ENCODE measurements at regions of chr6 and their contacts with region 1.

Region 1: DNA sequence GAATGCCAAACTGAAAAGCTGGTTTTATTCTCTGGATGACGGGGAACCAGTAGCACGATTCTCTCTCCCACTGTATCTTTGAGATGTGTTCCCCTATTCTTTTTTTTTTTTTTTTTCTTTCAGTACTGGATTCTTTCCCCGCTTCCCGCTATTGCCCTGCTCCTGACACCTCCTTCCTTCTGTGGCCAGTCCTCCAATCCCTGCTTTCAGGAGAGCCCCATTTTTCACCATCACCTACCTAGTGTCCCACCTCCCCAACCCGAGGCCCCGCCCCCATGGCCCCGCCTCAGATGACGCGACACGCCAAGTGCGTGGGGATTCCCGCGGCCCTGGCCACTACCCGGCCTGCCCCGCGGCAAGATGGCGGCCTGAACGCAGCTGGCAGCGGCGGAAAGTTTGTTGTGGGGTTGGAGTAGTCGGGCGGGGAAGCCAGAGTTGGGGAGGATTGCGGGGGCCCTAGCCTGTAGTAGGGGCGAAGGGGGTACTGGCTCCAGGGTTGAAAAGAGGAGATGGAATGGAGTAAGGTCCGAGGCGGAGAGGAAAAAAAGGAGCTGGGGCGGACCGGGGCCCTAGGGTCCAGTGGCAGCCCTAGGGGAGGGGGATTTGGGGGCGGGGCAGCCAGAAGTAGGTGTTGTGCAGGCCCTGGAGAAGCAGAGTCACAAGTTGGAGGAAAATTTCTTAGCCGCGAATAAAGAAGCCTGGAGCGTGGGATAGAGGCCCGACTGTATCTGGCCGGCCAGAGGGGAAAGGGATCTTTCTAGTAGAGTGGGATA is at the start of gene TJAP1:
- DNase-seq: peak; percentile 100
- H3K4me3 Mint-ChIP-seq: peak within 1 kb of the TSS; percentile 90
- H3K27ac Mint-ChIP-seq: peak within 1 kb of the TSS; percentile 82
- H3K4me1 Mint-ChIP-seq: peaks cover 47% of the 10 kb centered on the region
- H3K27me3 Mint-ChIP-seq: no peaks in the 10 kb centered on the region
- CTCF ChIP-seq: no peak
- total RNA-seq, gene TJAP1: 70.7 and 72.3 TPM in 2 replicates

Region 2: DNA sequence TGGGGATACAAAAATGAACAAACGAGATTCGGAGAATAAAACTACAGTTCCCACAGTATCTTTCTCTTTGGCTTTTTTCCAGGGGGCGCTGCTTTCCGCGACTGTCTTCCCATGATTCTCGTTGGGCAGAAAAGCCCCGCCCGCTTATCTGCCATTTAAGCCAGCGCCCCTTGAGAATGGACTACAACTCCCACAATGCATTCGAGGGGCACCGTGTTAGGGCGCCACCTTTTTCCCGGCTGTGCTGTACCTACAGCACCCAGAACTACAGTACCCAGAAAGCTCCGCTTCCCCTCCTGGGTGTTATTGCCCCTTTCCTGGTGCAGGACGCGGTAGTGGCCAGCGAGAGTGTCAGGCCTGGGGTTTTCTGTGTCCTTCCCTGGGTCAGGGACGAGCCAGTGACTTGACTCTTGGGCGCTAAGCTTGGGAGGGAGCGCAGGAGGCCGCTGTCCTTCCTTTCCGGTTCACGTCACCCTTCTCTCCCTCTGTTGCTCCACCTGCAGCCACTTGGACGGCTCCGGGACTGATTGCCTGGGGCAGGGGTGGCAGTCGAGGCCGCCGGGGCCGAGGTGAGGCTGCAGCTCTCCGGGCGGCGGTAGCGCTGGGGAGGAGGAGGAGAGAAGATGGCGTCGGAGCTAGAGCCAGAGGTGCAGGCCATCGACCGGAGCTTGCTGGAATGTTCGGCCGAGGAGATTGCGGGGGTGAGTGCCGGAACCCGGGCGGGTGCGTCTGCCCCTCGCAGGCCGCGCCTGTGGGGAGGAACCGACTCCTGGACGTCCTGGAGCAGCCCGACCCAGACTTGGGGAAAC is 913.5 kb before region 1 on chr6 and contains the start of gene UBR2:
- CTCF ChIA-PET with region 1: interaction called, 10 read pairs
- intact Hi-C with region 1: no loop called
- DNase-seq: peak; percentile 99
- H3K4me3 Mint-ChIP-seq: peak within 1 kb of the TSS; percentile 83
- H3K27ac Mint-ChIP-seq: peak within 1 kb of the TSS; percentile 70
- H3K4me1 Mint-ChIP-seq: peaks cover 17% of the 10 kb centered on the region
- H3K27me3 Mint-ChIP-seq: no peaks in the 10 kb centered on the region
- CTCF ChIP-seq: peak; percentile 55
- total RNA-seq, gene UBR2: 32.4 and 32.9 TPM in 2 replicates

Measured in Calu3 (cell line).